ENCODE measurements at regions of chr19 and their contacts with region 1.

Region 1: DNA sequence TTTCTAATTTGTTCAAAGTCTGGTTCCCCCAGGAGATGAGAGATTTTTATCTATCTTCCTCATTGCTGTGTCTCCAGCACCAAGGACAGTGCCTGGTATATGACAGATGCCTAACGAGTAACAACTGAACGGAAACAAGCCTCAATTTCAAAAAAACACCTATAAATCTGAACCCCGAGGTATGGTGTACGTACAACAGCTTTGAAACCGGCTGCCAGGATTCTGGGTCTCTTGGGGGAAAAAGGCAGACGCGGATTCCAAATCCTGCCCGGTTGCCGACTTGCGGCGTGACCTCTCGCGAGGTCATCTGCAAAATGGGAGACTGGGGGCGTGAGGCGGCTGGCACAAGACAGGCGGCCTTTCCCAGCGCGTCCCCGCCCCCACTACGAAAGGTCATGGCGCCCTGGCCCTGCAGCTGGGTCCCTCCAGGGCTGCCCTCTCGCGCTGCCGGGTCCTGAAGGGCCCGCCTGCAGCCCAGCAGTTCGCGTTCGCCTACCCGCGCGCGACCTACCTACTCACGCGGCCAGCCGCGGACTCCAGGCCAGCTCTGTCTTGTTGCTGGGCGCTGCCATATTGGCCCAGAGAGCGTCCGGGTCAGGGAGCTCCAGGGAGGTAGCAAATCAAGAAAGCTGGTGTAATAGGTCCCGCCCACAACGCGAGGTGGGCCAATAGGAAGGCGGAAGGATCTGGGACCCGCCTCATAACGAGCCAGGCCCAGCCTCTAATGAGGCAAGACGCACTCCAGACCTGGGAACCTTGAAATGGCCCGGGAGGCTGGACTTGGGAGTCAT is at the start of gene ECSIT:
- DNase-seq: peak; percentile 97 to 99 (median 98)
- H3K4me3 ChIP-seq: peak within 1 kb of the TSS; percentile 52 to 87 (median 60)
- H3K4me3 Mint-ChIP-seq: peak within 1 kb of the TSS; percentile 95 to 98
- H3K27ac ChIP-seq: peak within 1 kb of the TSS; percentile 63 to 81
- H3K27ac Mint-ChIP-seq: peak within 1 kb of the TSS; percentile 93 to 97 (median 95)
- H3K4me1 ChIP-seq: peaks cover 14 to 17% of the 10 kb centered on the region in 2 donors
- H3K4me1 Mint-ChIP-seq: peaks cover 10% of the 10 kb centered on the region
- H3K27me3 ChIP-seq: no peaks in the 10 kb centered on the region
- H3K27me3 Mint-ChIP-seq: no peaks in the 10 kb centered on the region
- CTCF ChIP-seq: no peak
- polyA plus RNA-seq, gene ECSIT: 26.4 to 31.6 (median 28.3) TPM

Region 2: DNA sequence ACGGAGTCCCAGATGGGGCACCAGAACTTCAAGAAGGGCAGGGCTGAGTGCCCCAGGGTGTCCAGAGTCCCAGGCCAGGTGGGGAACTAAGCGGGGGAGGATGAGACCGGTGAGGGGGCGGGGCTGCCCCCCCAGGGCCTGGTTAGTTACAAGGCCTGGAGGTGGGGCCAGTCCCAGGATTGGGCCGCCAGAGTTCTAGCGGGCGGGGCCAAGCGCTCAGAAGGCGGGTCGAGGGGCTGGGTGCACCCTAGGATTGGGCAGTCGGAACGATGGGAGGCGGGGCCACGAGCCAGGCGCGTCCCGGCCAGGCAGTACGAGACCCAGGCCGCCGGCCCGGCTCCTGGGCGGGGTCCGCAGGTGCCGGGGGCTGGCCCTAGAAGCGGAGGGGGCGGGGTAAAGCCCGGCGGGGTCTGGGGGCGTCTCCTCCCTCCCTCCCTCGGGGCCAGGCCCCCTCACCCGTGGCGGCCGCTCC is 23.7 kb before region 1 on chr19:
- intact Hi-C with region 1: loop called in 1 of 2 experiments (anchors 1 kb)
- DNase-seq: peak; percentile 91 to 94 (median 93)
- H3K4me3 ChIP-seq: peak overlapping the region; percentile 62 to 91 (median 66)
- H3K4me3 Mint-ChIP-seq: peak overlapping the region; percentile 81 to 84
- H3K27ac ChIP-seq: peak overlapping the region; percentile 58 to 90
- H3K27ac Mint-ChIP-seq: peak overlapping the region in 6 of 7 donors; percentile 62 to 91 (median 79)
- H3K4me1 ChIP-seq: peaks cover 17 to 22% of the 10 kb centered on the region in 2 donors
- H3K4me1 Mint-ChIP-seq: peaks cover 16% of the 10 kb centered on the region
- H3K27me3 ChIP-seq: no peaks in the 10 kb centered on the region
- H3K27me3 Mint-ChIP-seq: peaks cover 0 to 1% (median 0%) of the 10 kb centered on the region in 3 donors
- CTCF ChIP-seq: no peak

Region 3: GRCh38 chr19:11581740-11582139 is 53.0 kb after region 1 on chr19:
- intact Hi-C with region 1: loop called in 1 of 2 experiments (anchors 5 kb)
- DNase-seq: peak; percentile 52 to 64 (median 54)
- H3K4me3 ChIP-seq: peak overlapping the region in 1 of 3 experiments; percentile 47
- H3K4me3 Mint-ChIP-seq: peak overlapping the region; percentile 53 to 80
- H3K27ac ChIP-seq: peak overlapping the region; percentile 70 to 90
- H3K27ac Mint-ChIP-seq: peak overlapping the region; percentile 88 to 99 (median 95)
- H3K4me1 ChIP-seq: peaks cover 77 to 97% of the 10 kb centered on the region in 2 donors
- H3K4me1 Mint-ChIP-seq: peaks cover 80% of the 10 kb centered on the region
- H3K27me3 ChIP-seq: no peaks in the 10 kb centered on the region
- H3K27me3 Mint-ChIP-seq: peaks cover 2 to 13% (median 7%) of the 10 kb centered on the region in 3 donors
- CTCF ChIP-seq: no peak

Region 4: GRCh38 chr19:11639602-11640471 is 111.1 kb after region 1 on chr19:
- intact Hi-C with region 1: no loop called
- DNase-seq: peak; percentile 81 to 90 (median 82)
- H3K4me3 ChIP-seq: peak overlapping the region; percentile 60 to 86 (median 61)
- H3K4me3 Mint-ChIP-seq: peak overlapping the region; percentile 78 to 87
- H3K27ac ChIP-seq: no peak overlapping the region
- H3K27ac Mint-ChIP-seq: peak overlapping the region in 2 of 7 donors; percentile 37 to 73
- H3K4me1 ChIP-seq: peaks cover 7 to 12% of the 10 kb centered on the region in 2 donors
- H3K4me1 Mint-ChIP-seq: peaks cover 4% of the 10 kb centered on the region
- H3K27me3 ChIP-seq: no peaks in the 10 kb centered on the region
- H3K27me3 Mint-ChIP-seq: peaks cover 3 to 9% (median 8%) of the 10 kb centered on the region in 3 donors
- CTCF ChIP-seq: no peak

Measured in CD14-positive monocyte (primary cell).